ENCODE measurements at regions of chr3 and their contacts with region 1.

Region 1: GRCh38 chr3:175585898-175586297 is 726.8 kb downstream of the NAALADL2 start:
- DNase-seq: no peak
- H3K4me3 ChIP-seq: no peak overlapping the region
- H3K27ac ChIP-seq: no peak overlapping the region
- H3K4me1 ChIP-seq: no peaks in the 10 kb centered on the region
- CTCF ChIP-seq: no peak

Region 2: GRCh38 chr3:175606650-175607318 is 20.9 kb after region 1 on chr3:
- CTCF ChIA-PET with region 1: no interaction called
- POLR2A ChIA-PET with region 1: interaction called, 12 read pairs
- intact Hi-C with region 1: no loop called
- DNase-seq: no peak
- H3K4me3 ChIP-seq: no peak overlapping the region
- H3K27ac ChIP-seq: no peak overlapping the region
- H3K4me1 ChIP-seq: no peaks in the 10 kb centered on the region
- CTCF ChIP-seq: no peak